Sigmoid colon (tissue), 7 donors: ENCODE measurements at regions of chr2 and their contacts with region 1.

Region 1: GRCh38 chr2:149561309-149561926 is 26.2 kb downstream of the MMADHC start:
- DNase-seq: no peak
- H3K4me3 ChIP-seq: no peak overlapping the region
- H3K27ac ChIP-seq: no peak overlapping the region
- H3K4me1 ChIP-seq: peaks cover 0 to 5% (median 2%) of the 10 kb centered on the region in 4 donors
- H3K27me3 ChIP-seq: no peaks in the 10 kb centered on the region
- CTCF ChIP-seq: peak; percentile 48 to 89 (median 82)
- EP300 ChIP-seq: no peak
- POLR2A ChIP-seq: no peak

Region 2: DNA sequence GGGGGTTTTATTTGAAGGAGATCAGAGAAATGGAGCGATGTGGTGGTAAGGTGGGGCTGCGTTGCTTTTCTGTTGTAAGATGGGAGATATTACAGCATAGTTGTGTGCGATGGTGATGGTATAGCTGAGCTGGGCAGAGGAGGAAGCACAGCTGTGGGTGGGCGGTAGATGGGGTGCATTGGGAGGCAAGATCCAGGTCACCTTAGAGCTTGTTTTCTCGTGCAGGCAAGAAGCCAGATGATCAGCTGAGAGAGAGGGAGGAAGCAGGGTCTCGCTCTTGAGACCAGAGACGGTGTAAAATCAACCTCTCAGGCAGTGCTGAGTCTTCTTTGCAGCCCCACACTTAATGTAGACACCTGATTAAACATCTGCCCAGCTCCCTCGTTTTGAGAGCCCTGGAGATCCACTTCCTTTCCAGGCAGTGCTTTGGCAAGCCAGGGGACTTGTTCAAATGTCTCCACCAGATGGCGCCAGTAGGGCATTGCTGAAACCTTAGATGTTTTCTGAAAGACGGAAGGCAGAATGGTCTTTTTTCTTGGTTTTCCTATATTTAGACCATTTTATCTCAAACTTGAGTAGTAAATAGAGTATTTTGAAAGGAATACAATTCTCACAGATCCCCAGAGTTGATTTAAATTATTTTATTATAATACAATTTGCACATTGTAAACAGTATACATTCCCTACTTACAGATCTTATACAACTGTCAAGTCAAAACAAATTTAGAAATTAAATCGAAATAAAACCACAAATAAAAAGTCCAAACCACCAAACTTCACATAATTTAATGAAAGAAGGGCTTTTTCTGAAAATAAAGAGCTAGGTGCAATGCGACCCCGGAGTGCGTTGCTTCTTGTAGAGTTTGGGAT is 544.1 kb before region 1 on chr2:
- intact Hi-C with region 1: loop called (anchors 1 kb)
- DNase-seq: peak; percentile 82
- H3K4me3 ChIP-seq: no peak overlapping the region
- H3K27ac ChIP-seq: no peak overlapping the region
- H3K4me1 ChIP-seq: peaks cover 0 to 5% (median 2%) of the 10 kb centered on the region in 4 donors
- H3K27me3 ChIP-seq: no peaks in the 10 kb centered on the region
- CTCF ChIP-seq: peak in 3 of 4 experiments; percentile 60 to 85 (median 69)
- EP300 ChIP-seq: no peak
- POLR2A ChIP-seq: no peak

Region 3: GRCh38 chr2:149330126-149331022 is 231.0 kb before region 1 on chr2 and contains the start of gene LYPD6:
- intact Hi-C with region 1: loop called (anchors 10 kb)
- DNase-seq: peak; percentile 82
- H3K4me3 ChIP-seq: peak within 1 kb of the TSS; percentile 44 to 75 (median 66)
- H3K27ac ChIP-seq: peak within 1 kb of the TSS; percentile 28 to 68 (median 56)
- H3K4me1 ChIP-seq: peaks cover 0 to 23% (median 13%) of the 10 kb centered on the region in 4 donors
- H3K27me3 ChIP-seq: peaks cover 0 to 8% (median 7%) of the 10 kb centered on the region in 3 donors
- CTCF ChIP-seq: no peak
- EP300 ChIP-seq: no peak
- POLR2A ChIP-seq: no peak
- total RNA-seq, gene LYPD6: 1.1 to 2.0 (median 1.4) TPM

Region 4: GRCh38 chr2:149661844-149662243 is 100.4 kb after region 1 on chr2:
- intact Hi-C with region 1: no loop called
- DNase-seq: no peak
- H3K4me3 ChIP-seq: no peak overlapping the region
- H3K27ac ChIP-seq: no peak overlapping the region
- H3K4me1 ChIP-seq: peaks cover 0 to 5% (median 0%) of the 10 kb centered on the region in 4 donors
- H3K27me3 ChIP-seq: no peaks in the 10 kb centered on the region
- CTCF ChIP-seq: no peak
- EP300 ChIP-seq: no peak
- POLR2A ChIP-seq: no peak